ENCODE measurements at regions of chr6 and their contacts with region 1.

Region 1: DNA sequence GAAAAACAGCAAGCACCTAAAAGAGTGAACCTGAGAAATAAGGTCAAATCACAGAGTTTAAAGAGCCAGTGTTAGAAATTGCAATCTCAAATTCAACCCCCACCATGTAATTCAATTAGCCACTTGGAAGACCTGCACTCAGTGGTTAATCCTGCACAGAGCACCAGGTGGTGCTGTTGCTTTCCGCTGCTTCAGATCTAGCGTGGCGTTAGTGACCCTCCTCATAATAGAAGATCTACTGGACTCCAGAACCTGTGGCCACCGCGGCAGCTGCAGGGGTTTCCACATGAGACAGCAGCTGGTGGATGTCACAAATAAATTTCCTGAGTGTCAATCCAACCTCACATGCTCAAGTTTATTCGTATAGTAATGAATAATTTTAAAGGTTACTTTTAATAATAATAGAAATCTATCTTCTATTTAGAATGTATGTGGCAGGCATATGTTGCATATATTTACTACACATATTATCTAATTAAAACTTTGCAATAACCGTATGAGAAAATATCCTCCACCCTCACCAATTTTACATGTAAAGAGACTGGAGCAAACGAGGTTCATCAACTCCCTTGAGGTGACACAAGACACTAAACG is 84.4 kb downstream of the SYNE1 start:
- DNase-seq: peak; percentile 70 to 80 (median 73)
- H3K4me3 ChIP-seq: peak overlapping the region in 2 of 7 experiments; percentile 26 to 28
- H3K27ac ChIP-seq: no peak overlapping the region
- H3K4me1 ChIP-seq: peaks cover 0 to 2% (median 0%) of the 10 kb centered on the region in 4 experiments
- H3K27me3 ChIP-seq: no peaks in the 10 kb centered on the region

Region 2: GRCh38 chr6:152609188-152609587 is 56.5 kb after region 1 on chr6:
- CTCF ChIA-PET with region 1: no interaction called
- POLR2A ChIA-PET with region 1: no interaction called
- DNase-seq: no peak
- H3K4me3 ChIP-seq: no peak overlapping the region
- H3K27ac ChIP-seq: no peak overlapping the region
- H3K4me1 ChIP-seq: no peaks in the 10 kb centered on the region
- H3K27me3 ChIP-seq: no peaks in the 10 kb centered on the region

Region 3: DNA sequence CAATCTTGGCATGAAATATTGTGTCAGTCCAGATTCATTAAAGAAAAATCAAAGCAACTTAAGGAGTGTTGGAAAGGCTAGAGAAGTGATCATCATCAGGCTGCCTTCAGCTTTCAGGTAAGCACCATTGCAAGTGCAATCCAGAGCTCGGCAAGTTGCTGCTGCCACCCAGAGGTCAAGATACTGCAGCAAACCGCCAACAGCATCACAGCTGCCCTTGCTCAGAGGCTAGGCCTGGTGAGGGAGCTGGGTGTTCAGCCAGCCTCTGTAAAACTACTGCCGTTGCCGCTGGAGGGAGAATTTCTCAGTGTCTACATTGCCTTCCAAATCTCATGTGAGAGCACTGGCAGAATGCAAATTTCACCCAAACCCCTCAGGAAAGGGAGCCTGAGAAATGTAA is 90.3 kb after region 1 on chr6:
- CTCF ChIA-PET with region 1: interaction called, 28 read pairs
- POLR2A ChIA-PET with region 1: interaction called, 3 read pairs
- DNase-seq: peak; percentile 67 to 76 (median 73)
- H3K4me3 ChIP-seq: no peak overlapping the region
- H3K27ac ChIP-seq: no peak overlapping the region
- H3K4me1 ChIP-seq: no peaks in the 10 kb centered on the region
- H3K27me3 ChIP-seq: peaks cover under 1 to 9% (median 4%) of the 10 kb centered on the region in 5 experiments

Region 4: DNA sequence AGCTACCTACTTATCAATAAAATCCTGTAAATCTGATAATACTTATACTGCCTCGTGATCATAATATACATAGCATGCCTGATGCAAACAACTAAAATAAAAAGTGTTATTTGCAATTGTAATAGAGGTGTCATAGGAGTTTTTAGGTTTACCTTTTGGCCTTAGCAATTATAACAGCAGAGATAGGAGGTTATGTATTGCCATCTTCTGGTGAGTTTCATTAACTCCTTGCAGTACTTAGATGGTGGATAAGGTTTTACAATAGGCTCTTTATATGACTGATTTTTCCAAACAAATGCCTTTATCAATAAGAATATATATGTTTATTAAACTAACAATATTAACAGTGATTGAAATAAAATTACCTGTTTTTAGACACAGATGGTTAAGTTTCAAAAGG is 117.2 kb after region 1 on chr6:
- CTCF ChIA-PET with region 1: interaction called, 23 read pairs
- POLR2A ChIA-PET with region 1: no interaction called
- DNase-seq: peak; percentile 44 to 62 (median 59)
- H3K4me3 ChIP-seq: no peak overlapping the region
- H3K27ac ChIP-seq: no peak overlapping the region
- H3K4me1 ChIP-seq: peaks cover 0 to 11% (median 0%) of the 10 kb centered on the region in 4 experiments
- H3K27me3 ChIP-seq: no peaks in the 10 kb centered on the region

Region 5: GRCh38 chr6:152701081-152701862 is 148.6 kb after region 1 on chr6:
- CTCF ChIA-PET with region 1: interaction called, 21 read pairs
- POLR2A ChIA-PET with region 1: no interaction called
- DNase-seq: peak in 2 of 3 donors; percentile 47 to 58
- H3K4me3 ChIP-seq: peak overlapping the region in 5 of 7 experiments; percentile 66 to 89 (median 80)
- H3K27ac ChIP-seq: peak overlapping the region; percentile 96 to 97
- H3K4me1 ChIP-seq: peaks cover 4 to 51% (median 12%) of the 10 kb centered on the region in 4 experiments
- H3K27me3 ChIP-seq: no peaks in the 10 kb centered on the region